ENCODE measurements at regions of chr2 and their contacts with region 1.

Region 1: DNA sequence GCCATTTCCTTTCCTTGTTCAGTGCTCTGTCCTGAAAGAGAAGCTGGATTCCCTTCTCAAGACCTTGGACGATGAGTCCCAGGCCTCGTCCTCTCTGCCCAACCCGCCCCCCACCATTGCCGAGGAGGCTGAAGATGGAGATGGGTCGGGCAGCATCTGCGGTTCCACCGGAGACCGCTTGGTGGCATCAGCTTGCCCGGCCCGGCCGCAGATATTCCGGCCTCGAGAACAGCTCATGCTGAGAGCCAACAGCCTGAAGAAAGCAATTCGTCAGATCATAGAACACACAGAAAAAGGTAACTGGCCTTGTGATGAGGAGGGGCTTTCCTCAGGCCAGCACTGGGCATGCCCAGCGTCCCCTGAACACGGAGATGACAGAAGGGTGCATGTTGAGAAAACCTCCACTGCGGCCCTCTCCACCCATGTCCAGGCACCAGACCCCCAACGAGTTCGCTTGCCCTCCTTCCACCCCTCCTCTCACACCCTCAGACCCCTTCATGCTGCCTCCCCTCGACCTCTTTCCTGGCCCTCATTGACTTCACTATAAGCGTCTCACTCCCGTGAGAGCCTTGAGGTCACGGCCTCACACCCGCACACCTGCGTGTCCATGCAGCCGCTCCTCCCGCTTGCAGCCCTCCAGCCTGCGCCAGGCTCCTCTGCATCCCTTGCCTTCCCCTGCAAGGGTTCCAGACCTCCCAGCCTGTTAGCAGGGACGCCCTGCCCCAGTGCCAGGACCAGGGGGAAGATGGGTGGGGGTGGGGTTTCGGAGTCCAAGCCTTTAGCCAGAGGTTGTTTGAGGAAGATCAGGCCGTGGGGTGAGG is 95.0 kb downstream of the DGKD start:
- DNase-seq: no peak
- H3K4me3 ChIP-seq: no peak overlapping the region
- H3K27ac ChIP-seq: no peak overlapping the region
- H3K27me3 ChIP-seq: no peaks in the 10 kb centered on the region
- CTCF ChIP-seq: peak; percentile 79

Region 2: GRCh38 chr2:233061591-233062450 is 387.5 kb before region 1 on chr2:
- CTCF ChIA-PET with region 1: no interaction called
- POLR2A ChIA-PET with region 1: no interaction called
- DNase-seq: no peak
- H3K4me3 ChIP-seq: no peak overlapping the region
- H3K27ac ChIP-seq: no peak overlapping the region
- H3K27me3 ChIP-seq: no peaks in the 10 kb centered on the region
- CTCF ChIP-seq: peak; percentile 26; the same call in 1 of the 2 replicates

Region 3: GRCh38 chr2:233418761-233419625 is 30.3 kb before region 1 on chr2:
- CTCF ChIA-PET with region 1: no interaction called
- POLR2A ChIA-PET with region 1: no interaction called
- DNase-seq: no peak
- H3K4me3 ChIP-seq: no peak overlapping the region
- H3K27ac ChIP-seq: no peak overlapping the region
- H3K27me3 ChIP-seq: no peaks in the 10 kb centered on the region
- CTCF ChIP-seq: no peak

Region 4: GRCh38 chr2:233434666-233435330 is 14.5 kb before region 1 on chr2:
- CTCF ChIA-PET with region 1: interaction called, 16 read pairs
- POLR2A ChIA-PET with region 1: no interaction called
- DNase-seq: no peak
- H3K4me3 ChIP-seq: no peak overlapping the region
- H3K27ac ChIP-seq: no peak overlapping the region
- H3K27me3 ChIP-seq: no peaks in the 10 kb centered on the region
- CTCF ChIP-seq: no peak

Region 5: GRCh38 chr2:233470011-233470687 is 20.9 kb after region 1 on chr2:
- CTCF ChIA-PET with region 1: no interaction called
- POLR2A ChIA-PET with region 1: no interaction called
- DNase-seq: no peak
- H3K4me3 ChIP-seq: no peak overlapping the region
- H3K27ac ChIP-seq: no peak overlapping the region
- H3K27me3 ChIP-seq: no peaks in the 10 kb centered on the region
- CTCF ChIP-seq: no peak

Region 6: DNA sequence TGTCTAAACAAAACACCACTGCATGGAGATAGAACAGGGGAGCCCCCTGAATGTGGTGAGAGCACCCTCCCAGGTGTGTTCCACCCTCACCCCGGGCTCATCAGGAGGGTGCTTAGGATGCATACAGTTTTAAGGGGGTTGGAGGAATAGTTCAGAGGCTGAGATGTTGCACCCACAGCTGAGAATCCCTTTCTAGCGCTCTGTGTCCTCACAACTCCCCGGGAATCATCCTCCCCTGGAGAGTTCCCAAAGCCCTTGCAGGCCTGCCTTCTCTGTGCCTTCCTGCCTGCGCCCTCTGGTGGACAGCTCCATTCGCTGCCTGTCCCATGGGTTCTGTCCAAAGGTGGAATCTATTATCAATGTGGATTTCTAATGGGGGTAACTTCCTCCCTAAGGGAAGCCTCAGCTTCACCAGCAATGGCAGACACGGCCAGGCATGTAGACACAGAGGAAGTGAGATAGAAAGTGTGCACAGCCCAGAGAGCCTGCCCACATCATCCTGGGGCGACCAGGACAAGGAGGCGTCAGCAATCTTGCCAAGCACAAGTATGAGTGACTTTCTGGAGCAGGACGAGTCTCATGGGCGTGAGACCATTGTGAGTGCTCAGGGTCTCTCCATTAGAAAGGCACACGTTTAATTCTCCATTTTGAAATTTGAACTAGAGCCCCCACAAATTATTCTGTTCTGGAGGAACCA is 262.2 kb after region 1 on chr2:
- CTCF ChIA-PET with region 1: interaction called, 25 read pairs
- POLR2A ChIA-PET with region 1: no interaction called
- DNase-seq: peak; percentile 53
- H3K4me3 ChIP-seq: no peak overlapping the region
- H3K27ac ChIP-seq: no peak overlapping the region
- H3K27me3 ChIP-seq: no peaks in the 10 kb centered on the region
- CTCF ChIP-seq: peak; percentile 97

Region 7: GRCh38 chr2:233832869-233833311 is 383.6 kb after region 1 on chr2:
- CTCF ChIA-PET with region 1: interaction called, 19 read pairs
- POLR2A ChIA-PET with region 1: no interaction called
- DNase-seq: peak; percentile 42
- H3K4me3 ChIP-seq: no peak overlapping the region
- H3K27ac ChIP-seq: peak overlapping the region; percentile 65
- H3K27me3 ChIP-seq: no peaks in the 10 kb centered on the region
- CTCF ChIP-seq: peak; percentile 55

Measured in AG04450 (cell line).